ENCODE measurements at regions of chr20 and their contacts with region 1.

Region 1: GRCh38 chr20:23727016-23727415 is 23.7 kb downstream of the CST1 start:
- DNase-seq: no peak
- ATAC-seq: no peak
- H3K4me3 Mint-ChIP-seq: no peak overlapping the region
- H3K27ac Mint-ChIP-seq: no peak overlapping the region
- H3K4me1 Mint-ChIP-seq: peaks cover 8% of the 10 kb centered on the region
- H3K27me3 Mint-ChIP-seq: peaks cover 22% of the 10 kb centered on the region
- CTCF ChIP-seq: no peak

Region 2: GRCh38 chr20:23655491-23656211 is 71.4 kb before region 1 on chr20:
- CTCF ChIA-PET with region 1: no interaction called
- POLR2A ChIA-PET with region 1: no interaction called
- DNase-seq: no peak
- ATAC-seq: peak; percentile 30
- H3K4me3 Mint-ChIP-seq: no peak overlapping the region
- H3K27ac Mint-ChIP-seq: no peak overlapping the region
- H3K4me1 Mint-ChIP-seq: peaks cover 12% of the 10 kb centered on the region
- H3K27me3 Mint-ChIP-seq: peaks cover 4% of the 10 kb centered on the region; the same call in 1 of the 2 replicates
- CTCF ChIP-seq: no peak

Region 3: DNA sequence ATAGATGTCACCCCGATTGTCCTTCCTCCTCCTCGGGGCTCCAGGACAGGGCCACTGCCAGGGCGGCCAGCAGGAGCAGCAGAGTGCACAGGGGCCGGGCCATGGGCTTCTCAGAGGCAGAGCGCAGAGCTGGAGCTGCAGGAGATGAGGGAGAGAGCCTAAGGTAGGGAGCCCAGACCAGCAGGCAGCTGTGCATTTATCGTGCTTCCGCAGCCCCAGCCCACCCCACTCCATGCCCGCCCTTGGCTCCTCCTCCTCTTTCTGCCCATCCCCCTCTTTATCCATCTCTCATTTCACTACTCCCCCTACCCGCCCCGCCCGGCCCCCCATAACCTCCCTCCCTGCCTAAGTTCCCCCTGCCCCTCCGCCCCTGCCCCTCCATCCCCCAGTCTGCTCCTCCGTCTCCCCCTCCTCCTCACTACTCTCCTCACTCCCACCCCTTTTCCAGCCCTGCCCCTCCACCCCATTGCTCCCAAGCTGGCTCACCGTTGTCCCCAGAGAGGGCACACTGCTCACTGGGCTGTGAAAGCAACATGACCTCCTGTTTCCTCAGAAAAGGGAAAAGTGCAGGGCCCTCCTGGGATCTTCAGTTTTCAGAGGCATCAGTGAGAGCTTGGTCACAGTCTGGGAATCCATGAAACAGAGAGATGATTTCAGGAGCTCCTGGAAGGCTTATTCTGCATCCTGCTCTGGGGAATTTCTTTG is 49.2 kb after region 1 on chr20:
- CTCF ChIA-PET with region 1: interaction called, 11 read pairs
- POLR2A ChIA-PET with region 1: no interaction called
- DNase-seq: peak; percentile 54
- ATAC-seq: peak; percentile 93
- H3K4me3 Mint-ChIP-seq: no peak overlapping the region
- H3K27ac Mint-ChIP-seq: no peak overlapping the region
- H3K4me1 Mint-ChIP-seq: peaks cover 10% of the 10 kb centered on the region
- H3K27me3 Mint-ChIP-seq: peaks cover 45% of the 10 kb centered on the region
- CTCF ChIP-seq: no peak

Measured in WTC11 (cell line).